AG04450 (cell line): ENCODE measurements at regions of chr6 and their contacts with region 1.

Region 1: GRCh38 chr6:37051138-37052026 is 45.9 kb downstream of the FGD2 start:
- DNase-seq: no peak
- H3K4me3 ChIP-seq: no peak overlapping the region
- H3K27ac ChIP-seq: no peak overlapping the region
- H3K27me3 ChIP-seq: no peaks in the 10 kb centered on the region
- CTCF ChIP-seq: peak; percentile 91

Region 2: GRCh38 chr6:37029249-37029971 is 22.0 kb before region 1 on chr6:
- CTCF ChIA-PET with region 1: interaction called, 21 read pairs
- POLR2A ChIA-PET with region 1: interaction called, 3 read pairs
- DNase-seq: peak; percentile 69
- H3K4me3 ChIP-seq: no peak overlapping the region
- H3K27ac ChIP-seq: no peak overlapping the region
- H3K27me3 ChIP-seq: peaks cover 3% of the 10 kb centered on the region
- CTCF ChIP-seq: peak; percentile 79

Region 3: GRCh38 chr6:37068356-37069270 is 17.2 kb after region 1 on chr6:
- CTCF ChIA-PET with region 1: no interaction called
- POLR2A ChIA-PET with region 1: no interaction called
- DNase-seq: no peak
- H3K4me3 ChIP-seq: no peak overlapping the region
- H3K27ac ChIP-seq: no peak overlapping the region
- H3K27me3 ChIP-seq: no peaks in the 10 kb centered on the region
- CTCF ChIP-seq: no peak

Region 4: DNA sequence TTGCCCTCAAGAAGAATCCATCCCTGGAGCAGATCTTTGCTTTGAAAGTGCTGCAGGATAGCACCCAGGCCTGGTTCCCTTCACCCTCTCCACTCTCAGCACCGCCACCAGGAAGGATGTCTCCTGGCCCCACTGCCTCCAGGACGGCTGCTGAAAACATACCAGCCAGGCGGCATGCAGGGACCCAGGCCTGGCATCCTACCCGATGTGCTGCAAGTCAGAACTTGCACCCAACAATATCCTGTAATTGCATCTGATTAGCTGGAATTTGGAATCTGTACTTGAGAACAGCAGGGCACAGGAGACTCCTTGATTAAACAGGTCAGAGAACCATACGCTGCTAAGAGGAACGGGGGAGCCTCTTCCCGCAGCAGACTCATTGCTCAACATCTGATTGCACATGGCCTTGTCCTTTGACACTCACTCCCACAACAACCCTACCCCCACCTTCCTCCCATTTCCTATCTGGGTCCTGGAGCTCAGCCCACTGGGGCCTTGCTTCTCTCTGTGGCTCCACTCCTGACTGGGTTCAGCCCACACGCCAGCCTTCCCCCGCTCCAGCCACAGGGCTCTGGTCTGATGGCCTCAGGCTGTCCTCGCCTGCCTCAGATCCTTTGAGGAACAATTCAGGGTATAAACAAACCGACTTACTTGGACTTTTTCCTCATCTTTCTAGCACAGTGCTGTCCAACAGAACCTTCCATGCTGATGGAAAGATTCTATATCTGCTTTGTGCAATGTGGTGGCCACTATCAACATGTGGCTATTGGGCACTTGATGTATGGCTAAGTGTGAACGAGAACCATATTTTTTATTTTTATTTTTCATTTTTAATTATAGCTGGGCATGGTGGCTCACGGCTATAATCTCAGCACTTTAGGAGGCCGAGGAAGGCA is 32.1 kb after region 1 on chr6:
- CTCF ChIA-PET with region 1: interaction called, 11 read pairs
- POLR2A ChIA-PET with region 1: no interaction called
- DNase-seq: no peak
- H3K4me3 ChIP-seq: no peak overlapping the region
- H3K27ac ChIP-seq: no peak overlapping the region
- H3K27me3 ChIP-seq: no peaks in the 10 kb centered on the region
- CTCF ChIP-seq: no peak

Region 5: DNA sequence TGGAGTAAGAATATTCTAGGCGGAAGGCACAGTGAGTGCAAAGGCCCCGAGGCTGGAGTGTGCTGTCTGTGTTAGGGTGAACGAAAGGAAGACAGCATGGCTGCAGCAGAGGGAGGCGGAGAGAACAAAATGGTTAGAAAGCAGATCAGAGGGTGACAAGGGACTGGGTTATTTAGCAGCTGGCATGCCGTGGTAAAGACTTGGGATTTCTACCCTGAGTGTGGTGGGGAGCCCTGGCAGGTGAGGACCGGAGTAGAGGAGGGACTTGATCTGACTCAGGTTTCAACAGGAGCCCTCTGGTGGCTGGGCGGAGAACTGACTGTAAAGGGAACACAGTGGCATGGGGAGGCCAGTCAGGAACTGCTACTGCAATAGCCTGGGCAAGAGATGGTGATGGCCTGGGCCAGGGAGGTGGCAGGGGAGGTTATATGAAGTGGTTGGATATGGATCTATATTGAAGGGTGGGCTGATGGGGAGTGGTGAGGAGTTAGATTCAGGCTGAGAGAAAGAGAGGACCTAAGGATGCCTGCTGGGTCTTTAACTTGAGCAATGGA is 156.6 kb after region 1 on chr6:
- CTCF ChIA-PET with region 1: interaction called, 65 read pairs
- POLR2A ChIA-PET with region 1: interaction called, 4 read pairs
- DNase-seq: peak; percentile 47
- H3K4me3 ChIP-seq: no peak overlapping the region
- H3K27ac ChIP-seq: no peak overlapping the region
- H3K27me3 ChIP-seq: no peaks in the 10 kb centered on the region
- CTCF ChIP-seq: peak; percentile 87